AG04449 (cell line): ENCODE measurements at regions of chr2 and their contacts with region 1.

Region 1: DNA sequence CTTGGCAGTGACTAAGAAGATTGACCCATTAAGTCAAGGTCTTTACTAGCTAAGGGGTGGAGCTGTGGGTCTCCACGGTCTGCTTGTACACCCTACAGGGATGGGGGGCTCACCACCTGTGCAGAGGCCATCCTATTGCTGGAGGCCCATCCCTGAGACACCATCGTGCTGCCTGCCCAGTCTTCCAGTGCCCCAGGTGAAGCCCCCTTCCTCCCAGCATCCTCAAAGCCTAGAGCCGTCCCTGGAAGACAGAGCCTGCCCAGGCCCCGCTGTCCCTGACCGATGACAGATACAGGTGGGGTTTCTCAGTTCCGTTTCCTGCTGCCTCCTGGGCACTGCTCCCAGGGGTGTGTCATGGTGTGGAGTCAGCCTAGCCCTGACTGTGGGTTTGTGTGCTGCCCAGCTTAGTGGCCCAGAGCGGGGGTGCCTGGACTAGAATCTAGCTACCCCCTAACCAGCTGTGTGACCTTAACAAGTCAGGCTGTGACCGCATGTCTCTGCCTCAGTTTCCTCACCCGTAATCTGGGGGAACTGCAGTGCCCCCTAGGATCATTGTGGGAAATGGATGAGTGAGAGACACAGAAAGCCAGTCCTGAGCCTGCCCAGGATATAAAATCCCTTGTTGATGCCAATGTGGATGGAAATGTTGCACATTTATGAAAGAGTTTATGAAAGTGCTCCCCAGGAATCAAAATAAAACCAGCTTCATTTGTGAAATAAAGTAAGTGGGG is 2.0 kb downstream of the OTOS start:
- DNase-seq: no peak
- H3K4me3 ChIP-seq: no peak overlapping the region
- CTCF ChIP-seq: no peak

Region 2: DNA sequence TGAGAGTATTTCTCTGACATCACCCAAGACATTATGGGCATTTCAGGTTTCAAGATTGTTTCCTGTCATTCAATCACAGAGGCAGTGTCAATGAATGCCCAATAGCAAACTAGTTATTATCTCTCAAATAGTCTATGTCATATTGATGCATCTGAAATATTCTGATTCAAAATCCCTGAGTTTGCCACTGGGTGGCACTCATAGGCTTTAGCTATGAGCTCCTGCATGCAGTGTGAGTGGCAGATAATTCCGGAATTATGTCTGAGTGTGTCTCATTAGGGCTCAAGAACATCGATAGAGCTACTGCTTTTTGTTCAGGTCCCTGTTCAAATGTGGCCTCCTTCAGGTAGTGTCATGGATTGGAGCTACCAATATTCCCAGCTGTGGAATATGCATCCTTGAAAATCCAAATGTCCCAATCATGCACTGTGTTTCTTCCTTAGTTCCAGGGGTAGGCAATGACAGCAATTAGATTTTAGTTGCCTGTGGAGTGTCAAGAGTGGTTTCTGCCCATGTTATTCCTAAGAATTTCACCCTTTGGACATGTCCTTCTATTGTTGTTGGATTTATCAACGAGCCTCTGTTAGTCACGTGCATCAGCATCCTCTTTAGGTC is 77.3 kb before region 1 on chr2:
- CTCF ChIA-PET with region 1: interaction called, 227 read pairs
- POLR2A ChIA-PET with region 1: no interaction called
- DNase-seq: peak; percentile 4
- H3K4me3 ChIP-seq: no peak overlapping the region
- CTCF ChIP-seq: peak; percentile 54

Region 3: DNA sequence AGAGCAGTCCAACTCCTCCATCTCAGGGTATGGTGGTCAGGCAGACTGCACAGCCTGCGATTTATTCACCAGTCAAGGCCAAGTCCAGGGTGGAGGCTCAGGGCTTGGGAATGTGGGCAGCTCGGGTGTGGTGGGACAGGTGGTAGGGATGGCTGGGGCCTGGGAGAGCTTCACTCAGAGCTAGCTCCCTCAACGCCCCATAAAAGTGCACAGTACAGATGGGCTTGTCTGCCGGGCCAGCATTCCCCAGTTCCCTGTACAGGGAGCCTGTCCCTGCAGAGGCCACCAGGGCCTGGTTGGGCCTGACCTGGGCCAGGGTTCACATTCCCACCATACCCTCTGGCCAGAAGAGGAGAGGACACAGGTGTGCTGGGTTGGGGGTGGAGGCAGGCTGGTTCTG is 51.3 kb after region 1 on chr2:
- CTCF ChIA-PET with region 1: no interaction called
- POLR2A ChIA-PET with region 1: no interaction called
- DNase-seq: no peak
- H3K4me3 ChIP-seq: no peak overlapping the region
- CTCF ChIP-seq: no peak

Region 4: DNA sequence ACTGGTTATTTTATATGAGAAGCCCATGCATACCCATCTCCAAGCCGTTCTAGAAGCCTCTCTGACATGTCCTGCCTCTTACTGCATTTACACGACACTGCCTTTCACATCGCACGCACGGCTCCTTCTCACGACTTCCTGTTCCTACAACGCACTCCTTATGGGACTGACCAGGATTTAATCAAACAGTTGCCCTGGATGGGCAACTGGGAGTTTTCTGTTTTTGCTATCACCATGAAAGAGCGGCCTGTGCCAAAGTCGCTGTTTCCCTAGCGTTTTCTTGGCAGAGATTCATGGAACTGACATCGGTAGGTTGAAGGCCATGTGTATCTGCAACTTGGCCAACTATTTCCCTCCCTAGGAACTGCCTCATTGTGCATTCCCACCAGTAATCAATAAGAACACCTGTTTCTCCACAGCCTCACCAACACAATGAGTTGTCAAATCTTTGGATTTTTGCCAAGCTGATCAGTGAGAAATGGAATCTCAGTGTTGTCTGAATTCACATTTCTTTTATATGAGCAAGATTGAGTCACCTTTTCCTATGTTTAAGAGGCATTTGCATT is 99.3 kb after region 1 on chr2:
- CTCF ChIA-PET with region 1: no interaction called
- POLR2A ChIA-PET with region 1: no interaction called
- DNase-seq: no peak
- H3K4me3 ChIP-seq: no peak overlapping the region
- CTCF ChIP-seq: no peak